Ovary (tissue), 10 donors: ENCODE measurements at regions of chr5 and their contacts with region 1.

Region 1: GRCh38 chr5:78930721-78931120 is 54.4 kb downstream of the ARSB start:
- DNase-seq: no peak
- H3K4me3 ChIP-seq: no peak overlapping the region
- H3K27ac ChIP-seq: no peak overlapping the region
- H3K4me1 ChIP-seq: peaks cover 2% of the 10 kb centered on the region
- H3K27me3 ChIP-seq: no peaks in the 10 kb centered on the region
- CTCF ChIP-seq: no peak
- EP300 ChIP-seq: no peak
- POLR2A ChIP-seq: no peak

Region 2: DNA sequence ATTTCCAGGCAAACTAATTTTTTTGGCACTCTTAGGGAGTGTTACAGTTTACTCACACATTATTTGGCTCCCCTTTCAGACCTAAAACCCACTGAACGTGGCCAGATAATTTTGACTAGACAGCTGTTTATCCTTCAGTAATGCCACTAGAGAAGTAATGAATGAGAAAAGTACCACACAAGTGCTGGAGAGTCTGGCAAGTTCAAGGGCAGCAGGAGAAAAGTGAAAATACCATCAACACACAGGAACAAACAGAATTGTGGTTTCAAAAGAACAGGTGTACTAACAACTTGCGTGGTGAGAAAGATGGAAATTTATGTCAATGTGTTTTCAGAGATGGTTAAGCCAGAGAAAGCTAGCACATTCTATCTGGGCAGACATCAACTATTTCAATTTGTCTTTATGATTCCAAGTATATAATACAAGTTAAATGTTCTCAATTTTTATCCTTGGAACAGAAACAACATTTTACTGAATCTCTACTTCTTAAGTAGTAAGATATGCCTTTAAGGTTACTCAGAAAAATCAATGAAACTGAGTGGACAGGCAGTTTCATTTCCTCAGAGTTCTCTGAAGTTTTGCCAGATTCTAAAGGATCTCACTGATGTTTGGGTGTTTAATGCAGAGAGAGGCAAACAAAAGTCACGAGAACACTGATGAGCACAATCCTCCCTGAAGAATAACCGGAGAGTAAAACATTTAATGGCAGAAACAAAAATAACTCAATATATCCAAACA is 36.6 kb before region 1 on chr5:
- intact Hi-C with region 1: loop called in 1 of 4 experiments (anchors 1 kb)
- DNase-seq: no peak
- H3K4me3 ChIP-seq: no peak overlapping the region
- H3K27ac ChIP-seq: no peak overlapping the region
- H3K4me1 ChIP-seq: peaks cover 2% of the 10 kb centered on the region
- H3K27me3 ChIP-seq: no peaks in the 10 kb centered on the region
- CTCF ChIP-seq: no peak
- EP300 ChIP-seq: no peak
- POLR2A ChIP-seq: no peak